ENCODE measurements at regions of chrX and their contacts with region 1.

Region 1: DNA sequence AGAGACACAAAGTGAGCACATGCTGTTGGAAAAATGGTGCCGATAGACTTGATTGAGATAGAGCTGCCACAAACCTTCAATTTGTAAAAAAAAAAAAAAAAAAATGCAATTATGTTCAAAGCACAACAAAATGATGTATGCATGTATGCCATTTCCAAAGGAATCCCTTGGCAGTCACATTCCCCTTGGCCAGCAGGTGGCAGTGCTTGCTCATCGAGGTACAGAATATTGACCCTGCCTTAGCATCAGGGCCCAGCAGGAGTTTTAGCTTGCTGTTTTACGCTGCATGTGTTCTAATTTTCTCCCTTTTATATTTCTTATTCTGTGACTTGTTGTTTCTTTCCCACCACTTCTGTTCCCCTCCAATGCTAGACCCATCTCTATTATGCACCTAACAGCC is 34.5 kb upstream of the CYBB start:
- DNase-seq: peak; percentile 65 to 76 (median 68)
- H3K4me3 ChIP-seq: peak overlapping the region in 1 of 3 experiments; percentile 49
- H3K4me3 Mint-ChIP-seq: peak overlapping the region; percentile 37 to 77
- H3K27ac ChIP-seq: peak overlapping the region; percentile 97 to 98
- H3K27ac Mint-ChIP-seq: peak overlapping the region; percentile 95 to 99 (median 97)
- H3K4me1 ChIP-seq: peaks cover 26 to 29% of the 10 kb centered on the region in 2 donors
- H3K4me1 Mint-ChIP-seq: peaks cover 40% of the 10 kb centered on the region
- H3K27me3 ChIP-seq: peaks cover 0 to 6% of the 10 kb centered on the region in 2 donors
- H3K27me3 Mint-ChIP-seq: peaks cover 0 to 8% (median 0%) of the 10 kb centered on the region in 3 donors
- CTCF ChIP-seq: peak; percentile 72

Region 2: DNA sequence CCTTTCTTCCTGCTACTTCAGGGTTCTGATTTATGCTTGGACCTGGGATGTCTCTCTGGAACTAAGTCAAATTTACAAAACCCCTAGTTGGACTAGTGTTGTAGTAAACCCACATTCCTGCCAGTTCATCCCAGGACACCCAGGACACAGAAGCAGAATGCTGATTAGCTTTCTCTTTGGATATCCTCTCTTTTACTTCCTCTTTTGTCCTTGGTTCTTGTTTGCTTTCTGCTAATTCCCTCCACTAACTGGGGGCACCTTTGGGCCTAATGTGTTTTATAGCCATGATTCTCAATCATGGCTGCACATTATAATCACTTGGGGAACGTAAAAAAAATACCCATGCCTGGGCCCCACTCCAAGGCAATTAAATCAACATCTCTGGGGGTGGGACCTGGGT is 131.4 kb before region 1 on chrX:
- intact Hi-C with region 1: no loop called
- DNase-seq: no peak
- H3K4me3 ChIP-seq: no peak overlapping the region
- H3K4me3 Mint-ChIP-seq: no peak overlapping the region
- H3K27ac ChIP-seq: no peak overlapping the region
- H3K27ac Mint-ChIP-seq: no peak overlapping the region
- H3K4me1 ChIP-seq: no peaks in the 10 kb centered on the region
- H3K4me1 Mint-ChIP-seq: no peaks in the 10 kb centered on the region
- H3K27me3 ChIP-seq: no peaks in the 10 kb centered on the region
- H3K27me3 Mint-ChIP-seq: peaks cover 0 to 2% (median 1%) of the 10 kb centered on the region in 3 donors
- CTCF ChIP-seq: no peak

Region 3: DNA sequence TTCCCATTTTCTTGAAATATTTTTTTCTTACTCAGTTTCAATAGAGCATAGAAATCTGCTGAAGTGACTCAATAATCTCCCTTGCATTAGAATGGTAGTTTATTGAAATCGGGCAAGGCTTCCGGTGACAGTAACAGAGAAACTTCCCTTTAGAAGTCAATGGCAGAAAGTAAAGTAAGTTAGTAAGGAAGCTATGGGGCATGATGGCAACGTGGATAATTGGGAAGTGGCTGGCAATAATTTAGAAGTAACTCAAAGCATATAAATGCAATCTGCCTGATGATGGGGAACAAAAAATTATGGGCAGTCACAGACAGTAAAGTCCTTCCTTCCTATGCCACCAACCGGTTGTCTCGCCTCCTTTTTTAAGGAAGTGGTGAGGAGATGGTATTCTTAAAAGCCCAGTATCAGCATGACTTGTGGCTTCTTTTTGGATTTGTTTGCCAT is 42.1 kb after region 1 on chrX:
- intact Hi-C with region 1: loop called (anchors 2 to 5 kb)
- DNase-seq: peak; percentile 79 to 84 (median 83)
- H3K4me3 ChIP-seq: peak overlapping the region in 2 of 3 experiments; percentile 13 to 91
- H3K4me3 Mint-ChIP-seq: peak overlapping the region in 1 of 2 donors; percentile 9
- H3K27ac ChIP-seq: peak overlapping the region; percentile 28 to 84
- H3K27ac Mint-ChIP-seq: peak overlapping the region; percentile 91 to 97 (median 94)
- H3K4me1 ChIP-seq: peaks cover 71 to 94% of the 10 kb centered on the region in 2 donors
- H3K4me1 Mint-ChIP-seq: peaks cover 65% of the 10 kb centered on the region
- H3K27me3 ChIP-seq: no peaks in the 10 kb centered on the region
- H3K27me3 Mint-ChIP-seq: peaks cover 0 to 6% (median 0%) of the 10 kb centered on the region in 3 donors
- CTCF ChIP-seq: no peak

Region 4: GRCh38 chrX:37825209-37825842 is 80.0 kb after region 1 on chrX:
- intact Hi-C with region 1: loop called (anchors 5 to 10 kb)
- DNase-seq: peak; percentile 29 to 57 (median 45)
- H3K4me3 ChIP-seq: no peak overlapping the region
- H3K4me3 Mint-ChIP-seq: peak overlapping the region in 1 of 2 donors; percentile 21
- H3K27ac ChIP-seq: no peak overlapping the region
- H3K27ac Mint-ChIP-seq: peak overlapping the region in 2 of 7 donors; percentile 54 to 85
- H3K4me1 ChIP-seq: peaks cover 28 to 42% of the 10 kb centered on the region in 2 donors
- H3K4me1 Mint-ChIP-seq: peaks cover 49% of the 10 kb centered on the region
- H3K27me3 ChIP-seq: peaks cover 0 to 2% of the 10 kb centered on the region in 2 donors
- H3K27me3 Mint-ChIP-seq: peaks cover 0 to 10% (median 0%) of the 10 kb centered on the region in 3 donors
- CTCF ChIP-seq: peak; percentile 77

Region 5: GRCh38 chrX:37871626-37872302 is 126.4 kb after region 1 on chrX:
- intact Hi-C with region 1: no loop called
- DNase-seq: peak in 1 of 3 donors; percentile 17
- H3K4me3 ChIP-seq: no peak overlapping the region
- H3K4me3 Mint-ChIP-seq: no peak overlapping the region
- H3K27ac ChIP-seq: no peak overlapping the region
- H3K27ac Mint-ChIP-seq: no peak overlapping the region
- H3K4me1 ChIP-seq: no peaks in the 10 kb centered on the region
- H3K4me1 Mint-ChIP-seq: no peaks in the 10 kb centered on the region
- H3K27me3 ChIP-seq: peaks cover 0 to 3% of the 10 kb centered on the region in 2 donors
- H3K27me3 Mint-ChIP-seq: peaks cover 0 to 4% (median 3%) of the 10 kb centered on the region in 3 donors
- CTCF ChIP-seq: no peak

Region 6: DNA sequence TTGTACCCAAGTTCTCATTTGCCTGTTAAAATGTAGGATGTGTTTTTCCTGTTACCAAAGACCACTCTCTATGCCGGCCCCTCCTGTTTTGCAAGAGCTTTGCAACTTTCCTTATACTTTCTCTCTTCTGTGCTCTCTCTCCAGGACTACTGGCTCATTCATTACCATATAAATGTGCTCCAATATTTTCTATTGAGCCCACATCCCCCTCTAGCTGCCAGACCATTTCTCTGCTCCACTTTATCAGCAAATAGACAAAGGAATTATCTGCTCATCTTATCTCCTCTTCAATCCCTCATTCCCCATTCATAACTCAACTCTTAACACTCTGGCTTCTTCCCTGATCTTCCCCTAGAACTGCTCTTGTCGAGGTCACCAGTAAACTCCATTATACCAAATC is 548.4 kb after region 1 on chrX:
- intact Hi-C with region 1: no loop called
- DNase-seq: no peak
- H3K4me3 ChIP-seq: no peak overlapping the region
- H3K4me3 Mint-ChIP-seq: no peak overlapping the region
- H3K27ac ChIP-seq: no peak overlapping the region
- H3K27ac Mint-ChIP-seq: no peak overlapping the region
- H3K4me1 ChIP-seq: no peaks in the 10 kb centered on the region
- H3K4me1 Mint-ChIP-seq: no peaks in the 10 kb centered on the region
- H3K27me3 ChIP-seq: no peaks in the 10 kb centered on the region
- H3K27me3 Mint-ChIP-seq: peaks cover 0 to 5% (median 0%) of the 10 kb centered on the region in 3 donors
- CTCF ChIP-seq: no peak

Measured in CD14-positive monocyte (primary cell).